Activated CD8-positive, alpha-beta memory T cell treated with anti-CD3 and anti-CD28 coated beads, Interleukin-2, amount 10 ng/mL, durations not matched to agents 7 days and 5 days (primary cell): ENCODE measurements at regions of chr2 and their contacts with region 1.

Region 1: DNA sequence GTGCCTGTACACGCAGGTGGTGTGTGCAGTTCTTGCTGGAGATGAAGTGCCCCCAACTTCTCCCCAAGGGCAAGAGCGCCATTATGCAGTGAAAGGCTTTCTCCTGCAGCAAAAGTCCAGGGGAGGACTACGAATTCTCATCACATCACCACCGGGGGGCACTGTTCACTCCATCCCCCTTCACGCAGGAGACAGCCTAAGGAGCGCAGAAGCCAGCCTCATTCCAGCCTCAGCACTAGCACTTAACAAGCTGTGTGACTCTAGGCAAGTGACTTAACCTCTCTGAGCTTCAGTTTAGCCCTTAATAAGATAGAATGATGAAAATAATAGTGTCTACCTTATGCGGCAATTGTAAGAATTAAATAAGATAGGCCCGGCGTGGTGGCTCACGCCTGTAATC is 32.3 kb downstream of the DNMT3A start:
- DNase-seq: peak; percentile 77
- ATAC-seq: peak; percentile 38
- H3K4me3 Mint-ChIP-seq: no peak overlapping the region
- H3K27ac Mint-ChIP-seq: no peak overlapping the region
- H3K4me1 Mint-ChIP-seq: peaks cover 68% of the 10 kb centered on the region
- H3K27me3 Mint-ChIP-seq: no peaks in the 10 kb centered on the region

Region 2: GRCh38 chr2:25294573-25295462 is 14.6 kb before region 1 on chr2:
- CTCF ChIA-PET with region 1: interaction called, 13 read pairs
- DNase-seq: peak; percentile 94
- ATAC-seq: peak; percentile 97
- H3K4me3 Mint-ChIP-seq: peak overlapping the region; percentile 66
- H3K27ac Mint-ChIP-seq: peak overlapping the region; percentile 93
- H3K4me1 Mint-ChIP-seq: peaks cover 57% of the 10 kb centered on the region
- H3K27me3 Mint-ChIP-seq: no peaks in the 10 kb centered on the region

Region 3: DNA sequence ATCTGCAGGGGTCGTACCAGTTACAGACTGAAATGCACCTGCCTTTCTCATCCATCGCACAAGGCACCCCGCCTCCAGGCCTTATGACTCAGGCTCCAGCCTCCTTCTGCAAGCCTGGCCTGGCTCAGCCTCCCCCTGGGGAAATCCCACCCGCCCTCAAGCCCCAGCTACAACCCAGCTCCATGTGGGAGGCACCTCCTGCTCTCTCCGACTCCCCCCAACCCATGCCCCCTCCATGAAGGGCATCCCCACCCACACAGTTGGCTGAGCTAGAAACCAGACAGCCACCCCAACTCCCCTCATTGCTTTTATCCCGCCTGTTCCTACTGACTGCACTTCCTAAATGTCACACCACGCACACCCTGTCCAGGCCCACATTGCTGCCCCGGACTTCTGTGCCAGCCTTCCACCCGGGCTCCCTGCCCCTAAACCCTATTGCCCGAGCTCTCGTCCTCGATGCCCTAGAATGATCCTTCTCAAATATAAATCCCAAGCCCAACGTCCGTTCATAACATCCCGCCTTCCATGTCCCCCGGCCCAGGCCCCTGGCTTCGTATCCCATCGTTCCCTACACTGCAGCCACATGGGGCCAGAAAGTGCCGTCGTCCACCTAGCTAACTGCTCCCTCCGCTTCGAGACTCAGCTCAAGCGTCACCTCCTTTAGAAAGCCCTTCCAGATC is 22.4 kb after region 1 on chr2:
- CTCF ChIA-PET with region 1: interaction called, 15 read pairs
- DNase-seq: no peak
- ATAC-seq: no peak
- H3K4me3 Mint-ChIP-seq: no peak overlapping the region
- H3K27ac Mint-ChIP-seq: no peak overlapping the region
- H3K4me1 Mint-ChIP-seq: peaks cover 38% of the 10 kb centered on the region
- H3K27me3 Mint-ChIP-seq: no peaks in the 10 kb centered on the region

Region 4: DNA sequence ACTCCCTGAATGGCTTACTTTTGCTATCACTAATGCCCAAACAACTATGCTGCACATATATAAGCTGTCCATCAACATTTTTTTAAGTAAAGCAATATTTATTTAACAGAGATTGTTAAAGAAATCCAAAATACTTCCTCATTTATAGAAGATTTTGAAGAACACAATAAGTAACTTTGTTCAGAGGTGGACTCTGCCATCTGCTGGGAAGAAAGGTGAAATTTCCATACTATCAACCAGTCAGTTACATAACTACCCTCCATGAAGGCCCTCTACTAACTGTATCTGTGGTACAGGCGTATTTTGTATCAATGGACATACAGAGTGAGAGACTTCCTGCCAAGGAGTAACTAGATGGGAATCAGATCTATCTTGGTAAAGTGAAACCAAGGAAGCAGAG is 258.0 kb after region 1 on chr2:
- CTCF ChIA-PET with region 1: interaction called, 14 read pairs
- DNase-seq: no peak
- ATAC-seq: peak; percentile 81
- H3K4me3 Mint-ChIP-seq: no peak overlapping the region
- H3K27ac Mint-ChIP-seq: peak overlapping the region; percentile 82
- H3K4me1 Mint-ChIP-seq: peaks cover 19% of the 10 kb centered on the region
- H3K27me3 Mint-ChIP-seq: no peaks in the 10 kb centered on the region